Left cardiac atrium (tissue), 4 donors: ENCODE measurements at regions of chr5 and their contacts with region 1.

Region 1: DNA sequence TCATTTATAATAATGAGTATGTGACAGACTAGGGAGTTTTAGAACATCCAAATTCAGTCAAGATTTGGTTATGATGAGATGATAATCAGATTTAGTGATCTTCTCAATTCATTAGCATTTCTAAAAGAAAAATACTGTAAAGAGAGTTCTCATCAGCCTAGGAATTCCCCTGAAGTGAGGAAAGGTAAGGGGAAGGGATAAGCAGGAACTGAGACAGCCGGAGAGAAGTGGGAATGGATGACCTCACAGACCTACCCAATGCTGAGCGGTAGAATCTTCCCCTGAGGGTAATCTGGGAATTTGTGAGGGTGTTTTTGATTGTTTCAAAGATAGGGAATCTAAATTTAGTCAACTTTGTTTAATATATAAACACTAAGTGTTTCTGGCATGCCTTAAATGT is 16.7 kb upstream of the GPBP1 start:
- DNase-seq: no peak
- ATAC-seq: no peak

Region 2: DNA sequence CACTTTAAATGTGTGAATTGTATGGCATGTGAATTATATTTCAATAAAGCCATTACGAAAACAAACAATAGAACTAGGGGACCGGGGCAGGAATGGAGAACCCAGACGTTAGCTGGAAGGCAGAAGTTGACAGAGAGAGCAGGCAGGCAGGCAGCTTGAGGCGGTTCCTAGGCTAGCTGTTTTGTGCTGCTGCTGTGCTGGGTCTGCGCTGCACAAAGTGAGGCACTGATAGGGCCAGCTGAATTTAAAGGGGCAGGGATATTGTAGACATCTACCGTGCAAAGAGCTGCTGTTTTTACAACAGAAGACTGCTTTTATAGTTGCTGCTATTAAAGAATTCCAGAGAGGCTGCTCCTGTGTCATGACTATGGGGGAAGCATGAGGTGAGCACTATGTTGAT is 183.7 kb before region 1 on chr5:
- intact Hi-C with region 1: loop called in 1 of 2 experiments (anchors 10 kb)
- DNase-seq: no peak
- ATAC-seq: no peak